Activated CD4-positive, alpha-beta memory T cell treated with anti-CD3 and anti-CD28 coated beads for 36 hours (primary cell): ENCODE measurements at regions of chr22 and their contacts with region 1.

Region 1: DNA sequence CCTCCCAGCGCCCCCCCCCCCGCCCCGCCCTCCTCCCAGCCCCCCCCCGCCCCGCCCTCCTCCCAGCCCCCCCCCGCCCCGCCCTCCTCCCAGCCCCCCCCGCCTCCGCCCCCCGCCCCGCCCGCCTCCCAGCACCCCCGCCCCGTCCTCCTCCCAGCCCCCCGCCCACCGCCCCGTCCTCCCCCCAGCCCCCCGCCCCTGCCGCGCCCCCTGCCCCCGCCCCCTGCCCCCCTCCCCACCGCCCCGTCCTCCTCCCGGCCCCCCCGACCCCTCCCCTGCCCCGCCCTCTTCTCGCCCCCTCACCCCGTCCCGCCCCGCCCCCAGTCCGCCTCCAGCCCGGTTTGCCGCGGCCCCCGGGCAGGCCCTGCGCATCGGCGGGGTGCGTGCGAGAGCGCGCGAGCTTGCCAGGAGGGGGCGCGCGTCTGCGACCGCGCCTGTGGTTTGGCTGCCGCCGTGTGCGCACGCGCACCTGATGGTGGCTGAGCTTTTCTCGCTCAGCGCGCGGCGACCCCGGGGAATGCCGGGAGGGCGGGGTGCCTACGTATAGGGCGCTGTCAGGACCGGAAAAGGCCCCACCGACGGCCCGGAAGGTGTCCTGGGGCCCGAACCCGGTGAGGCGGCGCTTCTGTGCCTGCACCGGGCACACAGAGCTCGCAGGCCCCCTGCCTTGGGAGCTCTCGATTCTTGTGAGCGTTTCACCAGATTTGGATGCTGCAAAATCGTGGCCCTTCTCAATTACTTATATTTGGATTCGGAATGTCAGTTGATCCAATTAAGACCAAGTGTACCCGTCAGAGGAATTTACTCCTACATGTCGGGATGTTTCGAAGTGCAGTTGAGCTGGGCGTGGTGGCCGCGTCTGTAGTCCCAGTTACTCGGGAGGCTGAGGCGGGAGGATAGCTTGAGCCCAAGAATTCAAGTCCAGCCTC is 501 bp upstream of the TTLL12 start:
- DNase-seq: peak; percentile 98
- H3K4me3 Mint-ChIP-seq: peak overlapping the region; percentile 84
- H3K27ac Mint-ChIP-seq: peak overlapping the region; percentile 93
- H3K4me1 Mint-ChIP-seq: peaks cover 21% of the 10 kb centered on the region
- H3K27me3 Mint-ChIP-seq: no peaks in the 10 kb centered on the region

Region 2: GRCh38 chr22:43118953-43119458 is 68.4 kb before region 1 on chr22:
- CTCF ChIA-PET with region 1: no interaction called
- POLR2A ChIA-PET with region 1: no interaction called
- intact Hi-C with region 1: no loop called
- DNase-seq: no peak
- H3K4me3 Mint-ChIP-seq: no peak overlapping the region
- H3K27ac Mint-ChIP-seq: no peak overlapping the region
- H3K4me1 Mint-ChIP-seq: peaks cover 7% of the 10 kb centered on the region
- H3K27me3 Mint-ChIP-seq: no peaks in the 10 kb centered on the region

Region 3: GRCh38 chr22:43151251-43152002 is 36.0 kb before region 1 on chr22 and contains the start of gene TSPO:
- CTCF ChIA-PET with region 1: interaction called, 9 read pairs
- POLR2A ChIA-PET with region 1: interaction called, 8 read pairs
- intact Hi-C with region 1: loop called (anchors 5 kb)
- DNase-seq: peak; percentile 78
- H3K4me3 Mint-ChIP-seq: peak within 1 kb of the TSS; percentile 81
- H3K27ac Mint-ChIP-seq: peak within 1 kb of the TSS; percentile 77
- H3K4me1 Mint-ChIP-seq: peaks cover 18% of the 10 kb centered on the region
- H3K27me3 Mint-ChIP-seq: no peaks in the 10 kb centered on the region
- total RNA-seq, gene TSPO: 131 to 143 TPM

Region 4: DNA sequence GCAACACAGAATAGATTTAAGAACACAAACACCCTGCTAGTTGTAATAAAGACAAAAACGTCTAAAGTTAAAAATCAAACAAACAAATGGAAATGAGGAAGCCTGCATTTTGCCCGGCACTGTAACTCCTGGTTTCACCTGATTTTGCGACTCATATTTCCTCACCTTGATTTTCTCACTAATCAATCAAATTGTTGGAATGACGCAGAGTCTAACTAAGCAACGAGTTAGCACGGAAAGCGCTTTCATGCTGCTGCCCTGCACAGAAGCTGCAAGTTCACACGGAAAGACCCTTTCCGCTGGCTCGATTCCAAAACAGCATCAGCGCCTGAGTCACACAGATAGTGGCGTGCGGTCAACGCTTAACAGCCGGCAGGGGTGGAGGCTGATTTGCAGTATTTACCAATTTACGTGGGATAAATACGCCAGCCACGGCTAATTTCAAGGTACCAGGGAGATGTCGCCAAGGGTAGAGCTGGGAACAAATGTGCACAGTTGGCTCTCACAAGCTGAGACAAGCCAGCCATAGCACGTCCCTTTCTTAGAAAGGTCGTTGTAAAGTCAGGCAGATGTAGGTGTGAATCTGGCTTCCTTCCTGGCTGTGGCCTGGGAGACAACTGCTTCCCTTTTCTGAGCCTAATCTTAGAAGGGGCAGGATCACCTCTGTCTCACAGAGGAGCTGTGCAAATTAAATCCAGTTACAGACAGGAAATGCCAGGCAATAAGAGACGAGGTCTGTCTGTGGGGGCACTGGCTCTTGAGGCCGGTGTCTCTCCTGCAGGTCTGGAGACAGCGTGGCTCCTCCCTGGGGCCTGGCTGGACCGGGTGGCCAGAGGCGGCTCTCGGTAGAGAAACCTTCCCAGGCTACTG is 76.4 kb after region 1 on chr22:
- CTCF ChIA-PET with region 1: no interaction called
- POLR2A ChIA-PET with region 1: no interaction called
- intact Hi-C with region 1: loop called (anchors 10 kb)
- DNase-seq: peak; percentile 93
- H3K4me3 Mint-ChIP-seq: peak overlapping the region; percentile 39
- H3K27ac Mint-ChIP-seq: peak overlapping the region; percentile 65
- H3K4me1 Mint-ChIP-seq: peaks cover 25% of the 10 kb centered on the region
- H3K27me3 Mint-ChIP-seq: no peaks in the 10 kb centered on the region

Region 5: GRCh38 chr22:43955040-43955882 is 767.8 kb after region 1 on chr22 and contains the start of gene SAMM50:
- CTCF ChIA-PET with region 1: no interaction called
- POLR2A ChIA-PET with region 1: no interaction called
- intact Hi-C with region 1: loop called (anchors 5 kb)
- DNase-seq: peak; percentile 94
- H3K4me3 Mint-ChIP-seq: peak within 1 kb of the TSS; percentile 96
- H3K27ac Mint-ChIP-seq: peak within 1 kb of the TSS; percentile 82
- H3K4me1 Mint-ChIP-seq: peaks cover 30% of the 10 kb centered on the region
- H3K27me3 Mint-ChIP-seq: no peaks in the 10 kb centered on the region
- total RNA-seq, gene SAMM50: 41.9 to 42.9 TPM